ENCODE measurements at regions of chr20 and their contacts with region 1.

Region 1: DNA sequence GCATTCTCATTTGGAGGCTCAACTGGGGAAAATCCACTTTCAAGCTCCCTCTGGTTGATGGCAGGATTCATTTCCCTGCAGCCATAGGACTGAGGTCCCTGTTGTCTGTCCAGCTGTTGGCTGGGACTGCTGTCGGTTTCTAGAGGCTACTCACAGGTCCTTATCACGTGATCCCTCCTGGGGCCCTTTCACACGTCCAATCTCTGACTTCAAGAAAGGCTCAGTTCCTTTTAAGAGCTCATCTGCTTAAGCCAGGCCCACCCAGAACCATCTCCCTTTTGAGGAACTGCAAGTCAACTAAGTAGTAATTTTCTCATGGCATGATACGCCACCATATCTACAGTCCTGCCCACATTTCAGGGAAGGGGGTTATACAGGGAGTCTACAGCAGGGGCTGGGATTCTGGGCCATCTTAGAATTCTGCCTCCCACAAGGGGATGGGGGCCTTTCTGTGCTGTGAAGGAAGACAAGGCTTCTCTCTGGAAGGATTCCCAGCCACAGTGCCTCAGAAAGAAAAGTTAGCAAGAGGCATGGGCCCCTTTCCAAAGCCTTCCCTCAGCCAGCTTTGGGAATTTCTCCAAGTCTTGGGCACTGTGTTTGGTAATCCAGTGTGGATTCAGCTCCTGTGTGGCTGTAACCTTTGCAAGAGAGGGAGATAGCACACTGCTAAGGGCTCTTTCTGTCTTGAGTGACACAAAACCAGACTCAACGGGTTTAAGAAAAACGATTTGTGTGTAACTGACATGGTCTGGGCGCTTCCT is 66.4 kb downstream of the CTCFL start:
- DNase-seq: peak; percentile 65 to 89
- ATAC-seq: peak; percentile 93 to 94
- H3K4me3 ChIP-seq: no peak overlapping the region
- H3K27ac ChIP-seq: peak overlapping the region; percentile 61 to 78 (median 70)
- H3K4me1 ChIP-seq: peaks cover 22 to 25% of the 10 kb centered on the region in 2 donors
- H3K27me3 ChIP-seq: no peaks in the 10 kb centered on the region
- CTCF ChIP-seq: no peak
- POLR2A ChIP-seq: no peak

Region 2: DNA sequence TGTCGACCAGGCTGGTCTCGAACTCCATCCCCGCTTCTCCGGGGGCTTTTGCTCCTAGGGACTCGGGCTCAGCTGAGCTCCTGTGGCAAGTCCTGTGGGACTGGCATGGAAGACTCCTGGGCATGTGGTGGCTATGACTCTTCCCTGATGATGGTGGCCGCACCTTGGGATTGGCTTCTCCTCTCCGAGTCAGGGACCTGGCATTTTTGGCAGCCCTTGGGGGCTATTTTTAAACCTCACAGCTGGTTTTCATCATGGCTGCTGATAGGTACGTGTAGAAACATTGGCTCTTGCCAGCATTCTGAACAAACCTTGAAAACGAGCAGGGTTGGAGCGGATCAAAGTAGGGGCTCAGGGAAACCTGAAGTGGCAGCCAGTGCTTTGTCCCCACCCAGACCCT is 13.3 kb before region 1 on chr20:
- in situ Hi-C with region 1: no loop called
- intact Hi-C with region 1: loop called (anchors 1 kb)
- DNase-seq: peak; percentile 91 to 94
- ATAC-seq: peak; percentile 66 to 67
- H3K4me3 ChIP-seq: no peak overlapping the region
- H3K27ac ChIP-seq: peak overlapping the region; percentile 70 to 97 (median 96)
- H3K4me1 ChIP-seq: peaks cover 52 to 65% of the 10 kb centered on the region in 2 donors
- H3K27me3 ChIP-seq: no peaks in the 10 kb centered on the region
- CTCF ChIP-seq: no peak
- POLR2A ChIP-seq: peak; percentile 81 to 85

Region 3: GRCh38 chr20:57473246-57474048 is 14.9 kb after region 1 on chr20:
- in situ Hi-C with region 1: no loop called
- intact Hi-C with region 1: no loop called
- DNase-seq: no peak
- ATAC-seq: no peak
- H3K4me3 ChIP-seq: no peak overlapping the region
- H3K27ac ChIP-seq: peak overlapping the region in 2 of 4 donors; percentile 14 to 34
- H3K4me1 ChIP-seq: peaks cover 34 to 56% of the 10 kb centered on the region in 2 donors
- H3K27me3 ChIP-seq: peaks cover 0 to 2% (median 0%) of the 10 kb centered on the region in 3 donors
- CTCF ChIP-seq: peak in 1 of 5 experiments; percentile 28
- POLR2A ChIP-seq: no peak

Region 4: DNA sequence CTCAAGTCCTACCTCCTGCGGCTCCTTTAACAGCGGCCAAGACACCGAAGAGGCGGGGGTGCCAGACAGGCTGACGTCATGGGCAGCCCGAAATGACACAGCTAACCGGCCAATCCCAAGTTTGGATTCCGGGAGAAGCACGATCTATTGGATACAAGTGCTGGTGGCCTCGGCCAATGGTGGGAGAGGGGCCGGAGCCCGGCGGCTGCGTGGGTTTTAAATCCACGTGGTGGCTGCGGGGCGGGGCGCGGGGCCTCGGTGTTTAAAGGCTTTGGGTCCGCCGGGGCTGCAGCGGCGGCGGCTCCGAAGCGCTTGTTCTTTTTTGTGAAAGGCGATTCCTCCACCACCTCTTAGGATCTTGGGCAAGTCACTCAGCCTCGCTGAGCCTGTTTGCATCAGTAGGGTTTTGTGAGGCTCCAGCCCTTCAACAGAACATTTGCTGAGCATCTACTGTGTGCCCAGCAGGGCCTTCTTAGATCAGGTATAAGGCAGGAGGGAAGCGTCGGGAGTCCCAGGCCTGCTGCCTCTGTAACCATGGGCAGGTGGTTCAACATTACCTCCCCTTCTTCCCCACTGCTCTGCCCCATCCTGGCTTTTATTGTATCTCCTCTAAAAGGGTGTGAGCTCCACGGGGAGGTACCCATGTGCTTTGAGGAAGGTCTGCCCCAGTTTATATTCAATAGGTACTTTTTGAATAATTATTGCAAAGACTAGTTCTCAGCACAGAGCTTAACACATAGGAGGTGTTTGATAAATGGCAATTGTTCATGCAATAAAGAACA is 260.1 kb after region 1 on chr20:
- in situ Hi-C with region 1: no loop called
- intact Hi-C with region 1: loop called (anchors 5 kb)
- DNase-seq: peak; percentile 97 to 98
- ATAC-seq: peak; percentile 92 to 96
- H3K4me3 ChIP-seq: peak overlapping the region; percentile 32 to 45 (median 36)
- H3K27ac ChIP-seq: peak overlapping the region; percentile 21 to 79 (median 57)
- H3K4me1 ChIP-seq: peaks cover 49 to 54% of the 10 kb centered on the region in 2 donors
- H3K27me3 ChIP-seq: no peaks in the 10 kb centered on the region
- CTCF ChIP-seq: no peak
- POLR2A ChIP-seq: no peak

Measured in gastrocnemius medialis (tissue), 4 donors.